AG04449 (cell line): ENCODE measurements at regions of chr2 and their contacts with region 1.

Region 1: GRCh38 chr2:138090330-138090729 is 126.1 kb downstream of the HNMT start:
- DNase-seq: peak; percentile 1
- H3K4me3 ChIP-seq: no peak overlapping the region
- CTCF ChIP-seq: peak; percentile 76

Region 2: GRCh38 chr2:137888845-137889244 is 201.5 kb before region 1 on chr2:
- CTCF ChIA-PET with region 1: interaction called, 10 read pairs
- POLR2A ChIA-PET with region 1: no interaction called
- DNase-seq: no peak
- H3K4me3 ChIP-seq: no peak overlapping the region
- CTCF ChIP-seq: peak; percentile 44

Region 3: DNA sequence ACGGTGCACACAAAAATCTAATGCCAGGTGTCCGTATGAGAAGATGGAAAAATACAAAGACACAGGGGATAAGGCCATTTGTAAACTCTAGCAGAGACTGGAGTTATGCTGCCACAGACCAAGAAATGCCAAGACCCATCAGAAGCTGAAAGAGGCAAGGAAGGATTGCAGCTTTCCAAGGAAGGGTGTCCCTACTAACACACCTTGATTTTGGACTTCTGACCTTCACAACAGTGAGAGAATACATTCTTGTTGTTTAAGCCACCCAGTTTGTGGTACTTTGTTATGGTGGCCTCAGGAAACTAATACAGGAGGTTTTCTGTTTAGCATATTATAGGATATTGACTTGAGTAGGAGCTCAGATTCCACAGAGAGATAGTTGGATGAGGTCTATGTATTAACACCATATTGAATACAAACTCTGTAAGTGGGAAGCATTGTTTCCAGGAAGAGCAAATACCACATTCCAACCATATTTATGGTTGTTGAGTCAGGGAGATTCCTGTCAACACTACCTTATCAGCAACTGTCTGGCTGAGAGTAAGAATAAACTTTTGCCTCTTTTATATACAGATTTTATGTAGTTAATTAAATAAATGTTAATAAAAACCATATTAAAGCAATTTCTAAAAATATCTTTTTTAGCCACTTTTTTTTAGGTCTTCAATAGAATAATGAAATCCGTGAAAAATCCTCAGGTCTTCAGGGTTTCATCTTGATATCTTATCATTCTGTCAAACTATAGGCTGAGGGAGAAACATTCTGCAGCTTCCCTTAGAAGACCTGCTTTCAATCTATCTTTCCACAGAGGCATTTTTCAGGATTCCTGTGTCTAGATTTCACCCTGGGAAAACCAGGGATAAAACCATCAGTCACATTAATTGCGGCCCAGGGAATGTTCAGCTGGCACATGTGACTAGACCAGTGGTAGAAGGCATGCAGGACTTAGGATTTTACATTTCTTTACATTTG is 161.5 kb before region 1 on chr2:
- CTCF ChIA-PET with region 1: interaction called, 10 read pairs
- POLR2A ChIA-PET with region 1: interaction called, 4 read pairs
- DNase-seq: no peak
- H3K4me3 ChIP-seq: no peak overlapping the region
- CTCF ChIP-seq: no peak

Region 4: GRCh38 chr2:137957033-137957432 is 133.3 kb before region 1 on chr2:
- CTCF ChIA-PET with region 1: interaction called, 276 read pairs
- POLR2A ChIA-PET with region 1: no interaction called
- DNase-seq: peak; percentile 85
- H3K4me3 ChIP-seq: no peak overlapping the region
- CTCF ChIP-seq: no peak

Region 5: GRCh38 chr2:138105358-138106017 is 15.2 kb after region 1 on chr2:
- CTCF ChIA-PET with region 1: interaction called, 12 read pairs
- POLR2A ChIA-PET with region 1: no interaction called
- DNase-seq: no peak
- H3K4me3 ChIP-seq: no peak overlapping the region
- CTCF ChIP-seq: no peak